Heart left ventricle (tissue), 16 donors: ENCODE measurements at regions of chr10 and their contacts with region 1.

Region 1: GRCh38 chr10:15387021-15387420 is 15.9 kb upstream of the FAM171A1 start:
- DNase-seq: no peak
- ATAC-seq: no peak
- H3K4me3 ChIP-seq: no peak overlapping the region
- H3K27ac ChIP-seq: no peak overlapping the region
- H3K4me1 ChIP-seq: peaks cover 0 to 23% (median 6%) of the 10 kb centered on the region in 12 donors
- H3K27me3 ChIP-seq: peaks cover 0 to 8% (median 0%) of the 10 kb centered on the region in 9 donors
- CTCF ChIP-seq: no peak
- POLR2A ChIP-seq: no peak

Region 2: GRCh38 chr10:15245530-15245929 is 141.5 kb before region 1 on chr10:
- intact Hi-C with region 1: no loop called
- DNase-seq: no peak
- ATAC-seq: no peak
- H3K4me3 ChIP-seq: no peak overlapping the region
- H3K27ac ChIP-seq: no peak overlapping the region
- H3K4me1 ChIP-seq: no peaks in the 10 kb centered on the region
- H3K27me3 ChIP-seq: no peaks in the 10 kb centered on the region
- CTCF ChIP-seq: peak in 3 of 12 donors; percentile 10 to 27 (median 18)
- POLR2A ChIP-seq: no peak

Region 3: DNA sequence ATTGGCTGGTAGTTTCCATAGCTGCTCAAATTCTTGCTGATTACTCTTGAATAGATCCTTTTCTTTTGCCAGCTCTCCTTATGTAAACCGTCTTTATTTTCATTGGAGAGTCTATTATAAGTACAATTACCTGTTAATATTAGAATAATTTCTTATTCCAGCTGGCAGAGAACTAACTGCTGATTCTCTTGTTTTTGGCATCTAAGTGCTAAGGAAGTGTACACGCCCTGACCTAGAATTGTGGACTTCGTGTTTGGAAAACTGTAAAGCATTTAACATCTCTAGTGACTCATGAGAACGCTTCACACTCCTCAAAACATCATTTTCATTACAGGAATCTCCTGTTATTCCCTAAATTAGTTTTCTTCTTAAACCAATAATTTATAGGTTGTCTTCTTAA is 24.0 kb after region 1 on chr10:
- intact Hi-C with region 1: loop called in 1 of 10 experiments (anchors 2 kb)
- DNase-seq: no peak
- ATAC-seq: peak in 1 of 4 donors; percentile 63
- H3K4me3 ChIP-seq: no peak overlapping the region
- H3K27ac ChIP-seq: no peak overlapping the region
- H3K4me1 ChIP-seq: peaks cover 0 to 4% (median 0%) of the 10 kb centered on the region in 12 donors
- H3K27me3 ChIP-seq: no peaks in the 10 kb centered on the region
- CTCF ChIP-seq: no peak
- POLR2A ChIP-seq: no peak